ENCODE measurements at regions of chr6 and their contacts with region 1.

Region 1: DNA sequence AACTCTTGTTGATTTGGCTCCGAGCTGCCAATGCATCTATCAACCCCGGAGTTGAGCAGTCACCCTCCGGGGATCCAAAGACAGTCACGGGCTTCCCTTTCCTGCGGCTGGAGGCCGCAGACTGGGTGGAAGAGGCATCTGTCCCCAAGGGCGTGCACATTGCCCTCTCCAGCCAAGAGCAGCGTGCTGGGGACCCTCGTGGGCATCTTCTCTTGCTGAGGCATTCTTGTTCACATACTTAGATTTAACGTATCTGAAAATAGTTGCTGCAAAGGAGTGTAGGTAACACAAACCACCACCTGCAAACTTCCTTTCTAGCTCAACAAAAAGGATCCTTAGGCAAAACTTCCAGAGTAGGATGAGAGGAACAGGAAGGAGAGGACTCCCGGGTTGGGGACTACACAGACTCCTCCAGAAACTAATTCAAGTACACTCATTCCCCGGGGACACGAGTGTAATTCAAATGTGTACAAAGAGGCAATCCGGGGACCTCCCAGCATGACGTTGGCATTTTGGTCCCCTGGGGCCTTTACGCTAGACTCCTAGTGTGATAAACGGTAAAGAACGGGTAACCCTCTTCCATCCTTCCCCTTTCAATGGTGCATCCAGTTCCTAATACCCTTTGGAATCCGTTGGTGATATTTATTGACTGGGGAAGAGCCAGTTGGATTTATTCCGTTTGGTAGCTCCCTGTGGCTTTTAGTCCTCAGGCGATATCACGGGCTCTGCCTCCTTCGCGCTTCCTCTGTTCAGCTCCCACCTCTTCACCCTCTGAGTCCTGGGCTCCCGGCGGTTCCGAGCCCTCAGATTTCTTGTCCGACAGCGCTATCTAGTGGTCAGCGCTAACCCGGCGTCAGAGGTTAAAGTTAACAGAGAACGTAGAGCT is 2.7 kb upstream of the COL12A1 start:
- DNase-seq: peak; percentile 86 to 98
- H3K4me3 ChIP-seq: no peak overlapping the region
- CTCF ChIP-seq: peak in 1 of 3 donors; percentile 69
- POLR2A ChIP-seq: no peak

Region 2: DNA sequence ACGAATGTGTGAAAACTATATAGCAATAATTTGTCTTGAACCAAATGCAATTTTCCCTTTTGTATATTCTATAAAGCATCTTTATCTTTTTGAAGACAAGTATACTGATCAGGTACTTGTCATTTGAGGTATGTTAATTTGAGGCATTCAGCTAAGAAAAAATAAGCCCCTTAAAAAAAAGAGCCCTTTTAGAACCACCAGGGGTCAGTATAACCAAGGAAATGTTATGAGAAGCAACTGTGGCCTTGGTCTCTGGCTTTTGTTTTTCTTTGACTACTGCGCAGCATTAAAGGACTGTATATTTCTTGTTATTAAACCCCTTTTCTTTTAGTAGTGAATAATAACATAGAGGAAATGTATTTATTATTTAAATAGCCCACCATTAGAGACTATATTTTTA is 1469.4 kb before region 1 on chr6:
- intact Hi-C with region 1: loop called (anchors 5 kb)
- DNase-seq: no peak
- H3K4me3 ChIP-seq: no peak overlapping the region
- CTCF ChIP-seq: no peak
- POLR2A ChIP-seq: no peak

Region 3: DNA sequence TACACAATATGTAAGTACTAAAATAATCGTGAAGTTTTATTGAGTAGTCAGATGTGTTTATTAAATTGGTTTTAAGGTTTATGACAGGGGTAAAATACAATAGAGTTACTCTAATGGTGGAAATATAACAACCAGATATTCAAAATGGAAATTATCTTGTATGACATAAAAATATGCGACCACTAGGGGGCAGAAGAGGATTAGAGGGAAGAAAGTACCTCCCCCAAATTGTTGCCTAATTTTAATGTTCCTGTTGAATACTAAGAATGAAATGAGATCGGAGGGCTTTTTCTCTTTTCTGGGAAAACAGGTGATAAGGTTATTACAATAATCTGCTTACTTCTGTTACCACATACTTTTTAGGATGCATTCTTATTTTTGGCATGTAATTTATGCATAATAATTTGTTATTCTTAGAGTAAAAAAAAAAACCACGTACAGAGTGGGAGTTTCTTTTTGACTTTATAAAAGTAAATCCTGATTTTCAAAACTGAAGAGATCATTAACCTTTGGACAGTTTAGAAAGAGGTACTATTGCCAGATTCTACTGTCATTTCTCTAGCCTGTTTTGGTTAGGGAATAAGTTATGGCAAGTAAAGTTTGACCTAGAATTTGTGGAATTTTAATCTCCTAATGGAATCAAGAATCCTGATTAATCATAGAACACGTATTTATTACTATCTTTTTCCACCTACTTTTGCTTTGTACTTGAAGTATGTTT is 1353.4 kb before region 1 on chr6:
- intact Hi-C with region 1: loop called (anchors 10 kb)
- DNase-seq: no peak
- H3K4me3 ChIP-seq: no peak overlapping the region
- CTCF ChIP-seq: peak in 1 of 3 donors; percentile 38
- POLR2A ChIP-seq: no peak

Region 4: DNA sequence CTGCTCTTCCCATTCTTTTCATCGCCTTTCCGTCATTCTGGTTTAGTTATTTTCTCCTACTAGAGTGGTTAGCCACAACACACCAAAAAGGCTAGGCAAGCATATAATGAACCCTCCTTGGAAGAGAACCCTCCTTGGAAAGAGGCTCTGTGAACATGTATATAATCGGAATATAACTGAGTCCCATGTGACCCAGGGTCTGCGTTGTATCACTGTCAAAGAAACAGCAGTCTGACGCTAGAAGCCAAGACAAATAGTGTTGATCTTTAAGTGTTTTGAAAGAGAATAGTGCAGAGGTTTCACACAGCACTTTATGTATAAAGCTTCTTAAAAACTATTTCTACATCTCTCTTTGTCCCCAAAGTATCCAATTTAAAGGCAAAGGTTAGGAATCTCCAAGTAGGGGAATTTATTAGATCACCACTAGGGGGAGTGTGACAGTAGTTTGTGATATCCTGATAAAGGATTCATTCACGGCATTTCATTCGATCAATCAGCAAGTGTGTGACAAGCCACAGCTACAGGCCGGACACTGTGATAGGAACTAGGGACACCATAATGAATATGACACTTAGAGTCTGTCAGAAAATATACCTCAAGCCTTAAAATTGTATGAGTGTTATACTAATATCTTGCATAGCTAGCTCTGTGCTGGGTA is 1117.3 kb before region 1 on chr6:
- intact Hi-C with region 1: loop called (anchors 2 kb)
- DNase-seq: no peak
- H3K4me3 ChIP-seq: no peak overlapping the region
- CTCF ChIP-seq: peak in 1 of 3 donors; percentile 45
- POLR2A ChIP-seq: no peak

Region 5: GRCh38 chr6:74410630-74411029 is 797.9 kb before region 1 on chr6:
- intact Hi-C with region 1: loop called (anchors 10 kb)
- DNase-seq: no peak
- H3K4me3 ChIP-seq: no peak overlapping the region
- CTCF ChIP-seq: no peak
- POLR2A ChIP-seq: no peak

Region 6: DNA sequence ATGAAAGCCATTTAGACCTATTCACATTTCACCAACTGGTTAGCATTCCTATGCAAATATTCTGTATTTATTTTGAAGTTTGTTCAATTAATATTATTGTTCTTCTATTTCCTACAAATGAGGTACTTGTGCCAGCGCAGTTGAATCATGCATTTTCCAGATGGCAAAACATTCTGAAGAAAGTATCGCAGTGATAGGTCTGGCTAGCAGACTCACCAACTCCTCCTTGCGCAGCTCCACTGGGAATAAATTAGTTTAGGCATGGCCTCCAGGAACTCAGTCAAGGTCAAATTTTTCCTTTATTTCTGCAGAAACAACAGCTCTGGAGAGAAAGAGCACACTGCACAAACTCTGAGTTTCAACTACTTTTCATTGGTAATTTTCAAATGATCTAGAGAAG is 440.4 kb before region 1 on chr6:
- intact Hi-C with region 1: loop called (anchors 5 kb)
- DNase-seq: no peak
- H3K4me3 ChIP-seq: no peak overlapping the region
- CTCF ChIP-seq: no peak
- POLR2A ChIP-seq: no peak